CD14-positive monocyte (primary cell): ENCODE measurements at regions of chr1 and their contacts with region 1.

Region 1: DNA sequence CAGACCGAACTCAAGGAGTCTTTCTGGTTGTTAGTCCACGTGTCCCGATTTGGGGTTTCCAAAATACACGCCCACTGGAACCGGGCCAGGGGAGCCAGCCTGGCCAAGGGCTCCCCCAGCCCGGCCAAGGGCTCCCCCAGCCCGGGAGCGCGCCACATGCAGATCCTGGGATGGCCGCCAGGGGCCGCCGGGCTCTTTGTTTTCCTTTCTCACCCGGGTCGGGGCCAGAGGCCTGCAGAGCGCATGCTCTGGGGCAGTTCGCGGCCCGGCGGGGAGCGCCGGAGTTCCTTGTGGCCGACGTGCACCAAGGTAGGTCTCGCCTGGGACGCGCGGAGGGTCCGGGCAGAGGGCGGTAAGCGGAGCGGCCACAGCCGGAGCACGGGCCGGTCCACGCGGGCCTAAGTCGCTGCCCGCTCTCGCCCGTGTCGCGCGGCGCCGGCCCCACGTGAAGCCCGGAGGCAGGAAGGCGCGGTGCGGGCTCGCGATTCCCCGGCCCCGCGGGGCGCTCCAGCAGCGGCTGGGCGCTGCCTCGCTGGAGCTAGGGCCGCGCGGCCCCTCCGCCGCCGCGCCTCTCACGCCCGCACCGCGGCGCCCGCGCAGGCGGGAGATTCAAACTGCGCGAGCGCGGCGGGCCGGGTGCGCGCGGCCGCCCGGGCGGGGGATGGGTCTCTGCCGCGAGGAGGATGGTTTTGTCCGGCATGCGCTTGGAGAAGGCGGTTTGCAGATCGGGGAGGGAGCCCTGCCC is 12.3 kb downstream of the RCC1 start:
- DNase-seq: peak; percentile 80 to 87 (median 81)
- H3K4me3 ChIP-seq: peak overlapping the region; percentile 57 to 88 (median 60)
- H3K4me3 Mint-ChIP-seq: peak overlapping the region; percentile 88 to 89
- H3K27ac ChIP-seq: peak overlapping the region; percentile 16 to 59
- H3K27ac Mint-ChIP-seq: peak overlapping the region; percentile 78 to 94 (median 86)
- H3K4me1 ChIP-seq: peaks cover 15 to 17% of the 10 kb centered on the region in 2 donors
- H3K4me1 Mint-ChIP-seq: peaks cover 23% of the 10 kb centered on the region
- H3K27me3 ChIP-seq: no peaks in the 10 kb centered on the region
- H3K27me3 Mint-ChIP-seq: peaks cover 0 to 2% (median 2%) of the 10 kb centered on the region in 3 donors
- CTCF ChIP-seq: peak; percentile 100

Region 2: GRCh38 chr1:28552758-28553663 is 34.8 kb after region 1 on chr1 and contains the start of gene TRNAU1AP:
- intact Hi-C with region 1: loop called (anchors 5 kb)
- DNase-seq: peak; percentile 94 to 95 (median 95)
- H3K4me3 ChIP-seq: peak within 1 kb of the TSS; percentile 81 to 94 (median 91)
- H3K4me3 Mint-ChIP-seq: peak within 1 kb of the TSS; percentile 99 to 100
- H3K27ac ChIP-seq: peak within 1 kb of the TSS; percentile 14 to 84
- H3K27ac Mint-ChIP-seq: peak within 1 kb of the TSS; percentile 89 to 97 (median 91)
- H3K4me1 ChIP-seq: peaks cover 11 to 16% of the 10 kb centered on the region in 2 donors
- H3K4me1 Mint-ChIP-seq: peaks cover 6% of the 10 kb centered on the region
- H3K27me3 ChIP-seq: no peaks in the 10 kb centered on the region
- H3K27me3 Mint-ChIP-seq: peaks cover 0 to 3% (median 2%) of the 10 kb centered on the region in 3 donors
- CTCF ChIP-seq: no peak
- polyA plus RNA-seq, gene TRNAU1AP: 26.3 to 28.4 (median 26.7) TPM

Region 3: DNA sequence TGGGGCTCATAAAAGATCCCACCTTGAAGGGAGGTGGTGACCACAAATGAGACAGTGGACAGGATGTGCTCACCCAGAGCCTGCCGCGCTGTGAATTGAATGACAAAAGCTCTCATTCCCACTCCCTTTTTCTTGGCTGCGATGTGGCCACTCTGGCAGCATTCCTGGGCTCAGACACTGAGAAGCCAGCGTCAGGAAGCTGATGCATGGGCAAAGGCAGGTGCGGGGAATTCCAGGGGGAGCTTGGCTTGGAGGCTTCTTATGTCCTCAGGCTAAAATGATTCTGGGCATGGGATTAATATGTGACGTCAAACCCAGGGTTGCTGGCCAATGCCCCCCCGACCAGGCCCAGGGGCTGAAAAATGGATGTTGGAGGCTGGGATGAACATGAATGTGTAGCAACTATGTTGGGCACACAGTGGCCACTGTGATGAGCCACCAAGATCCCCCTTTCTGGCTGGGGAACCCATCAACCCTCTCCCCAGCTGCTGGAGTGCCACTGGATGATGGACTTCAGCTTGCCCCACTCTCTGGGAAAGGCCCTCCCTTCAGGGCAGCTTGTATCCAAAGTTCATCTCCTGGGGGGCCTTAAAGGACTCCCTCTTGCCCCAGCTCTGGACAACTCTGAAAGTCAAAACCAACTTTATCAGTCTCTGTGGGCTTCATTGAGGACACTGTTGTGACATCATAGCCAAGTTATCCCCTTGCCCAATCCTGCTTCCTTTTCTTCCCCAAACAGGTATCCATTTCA is 76.7 kb after region 1 on chr1:
- intact Hi-C with region 1: loop called (anchors 5 kb)
- DNase-seq: no peak
- H3K4me3 ChIP-seq: no peak overlapping the region
- H3K4me3 Mint-ChIP-seq: no peak overlapping the region
- H3K27ac ChIP-seq: no peak overlapping the region
- H3K27ac Mint-ChIP-seq: no peak overlapping the region
- H3K4me1 ChIP-seq: peaks cover 23 to 30% of the 10 kb centered on the region in 2 donors
- H3K4me1 Mint-ChIP-seq: peaks cover 26% of the 10 kb centered on the region
- H3K27me3 ChIP-seq: peaks cover 0 to 5% of the 10 kb centered on the region in 2 donors
- H3K27me3 Mint-ChIP-seq: peaks cover 4 to 9% (median 8%) of the 10 kb centered on the region in 3 donors
- CTCF ChIP-seq: no peak

Region 4: GRCh38 chr1:28602536-28603439 is 84.6 kb after region 1 on chr1:
- intact Hi-C with region 1: loop called (anchors 5 kb)
- DNase-seq: peak; percentile 29 to 55 (median 53)
- H3K4me3 ChIP-seq: no peak overlapping the region
- H3K4me3 Mint-ChIP-seq: no peak overlapping the region
- H3K27ac ChIP-seq: no peak overlapping the region
- H3K27ac Mint-ChIP-seq: peak overlapping the region in 1 of 7 donors; percentile 66
- H3K4me1 ChIP-seq: no peaks in the 10 kb centered on the region
- H3K4me1 Mint-ChIP-seq: no peaks in the 10 kb centered on the region
- H3K27me3 ChIP-seq: no peaks in the 10 kb centered on the region
- H3K27me3 Mint-ChIP-seq: no peaks in the 10 kb centered on the region
- CTCF ChIP-seq: peak; percentile 47

Region 5: DNA sequence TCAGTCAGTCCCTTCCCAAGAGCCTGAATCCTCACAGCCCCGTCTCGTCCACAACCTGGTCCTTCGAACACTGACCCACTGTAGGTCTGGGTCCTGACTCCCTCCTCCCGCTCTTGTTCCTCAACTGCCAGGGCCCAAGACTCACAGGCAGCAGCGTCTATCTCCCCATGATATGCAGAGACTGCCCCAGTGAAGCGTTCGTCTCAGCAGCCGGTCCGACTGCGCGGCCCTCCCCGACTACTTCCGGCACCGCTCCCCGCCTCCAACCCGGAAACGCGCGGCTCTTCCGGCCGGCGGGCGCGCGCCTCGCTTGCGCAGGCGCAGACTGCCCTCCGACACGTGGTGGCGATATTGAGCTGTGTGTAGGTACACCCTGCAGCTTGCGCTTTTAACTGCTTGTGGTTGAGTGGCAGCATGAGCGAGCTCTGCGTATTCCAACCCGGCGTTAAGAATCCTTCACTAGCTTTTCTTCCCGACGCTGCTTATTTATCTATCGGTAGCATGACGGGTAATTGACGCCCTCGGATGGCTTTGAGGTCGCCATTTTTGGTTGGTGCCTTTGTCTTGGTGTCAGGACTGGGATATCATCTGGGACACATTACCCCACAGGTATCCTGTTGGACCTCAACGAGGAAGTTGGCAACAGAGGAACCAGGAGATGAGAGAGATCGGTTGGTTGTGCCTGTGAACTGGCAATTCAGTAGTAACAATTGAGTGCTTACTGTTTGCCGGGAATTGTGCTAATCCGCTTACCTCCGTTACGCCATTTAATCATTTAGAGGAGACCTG is 124.9 kb after region 1 on chr1 and contains the start of gene TAF12:
- intact Hi-C with region 1: no loop called
- DNase-seq: peak; percentile 92 to 95 (median 94)
- H3K4me3 ChIP-seq: peak within 1 kb of the TSS; percentile 63 to 96 (median 68)
- H3K4me3 Mint-ChIP-seq: peak within 1 kb of the TSS; percentile 100
- H3K27ac ChIP-seq: peak within 1 kb of the TSS; percentile 77 to 97
- H3K27ac Mint-ChIP-seq: peak within 1 kb of the TSS; percentile 98 to 99 (median 99)
- H3K4me1 ChIP-seq: peaks cover 40 to 44% of the 10 kb centered on the region in 2 donors
- H3K4me1 Mint-ChIP-seq: peaks cover 42% of the 10 kb centered on the region
- H3K27me3 ChIP-seq: no peaks in the 10 kb centered on the region
- H3K27me3 Mint-ChIP-seq: peaks cover 0 to 2% (median 0%) of the 10 kb centered on the region in 3 donors
- CTCF ChIP-seq: no peak
- polyA plus RNA-seq, gene TAF12: 36.7 to 53.7 (median 53.7) TPM

Region 6: GRCh38 chr1:28736450-28737306 is 218.5 kb after region 1 on chr1 and contains the start of gene YTHDF2:
- intact Hi-C with region 1: loop called in 1 of 2 experiments (anchors 10 kb)
- DNase-seq: peak; percentile 95 to 96 (median 95)
- H3K4me3 ChIP-seq: peak within 1 kb of the TSS; percentile 73 to 95 (median 78)
- H3K4me3 Mint-ChIP-seq: peak within 1 kb of the TSS; percentile 86 to 99
- H3K27ac ChIP-seq: peak within 1 kb of the TSS; percentile 74 to 91
- H3K27ac Mint-ChIP-seq: peak within 1 kb of the TSS; percentile 91 to 97 (median 95)
- H3K4me1 ChIP-seq: peaks cover 20 to 38% of the 10 kb centered on the region in 2 donors
- H3K4me1 Mint-ChIP-seq: peaks cover 27% of the 10 kb centered on the region
- H3K27me3 ChIP-seq: no peaks in the 10 kb centered on the region
- H3K27me3 Mint-ChIP-seq: peaks cover 0 to 2% (median 0%) of the 10 kb centered on the region in 3 donors
- CTCF ChIP-seq: peak; percentile 99
- polyA plus RNA-seq, gene YTHDF2: 20.7 to 81.6 (median 74.2) TPM